Dendritic cell treated with granulocyte-macrophage colony-stimulating factor and Interleukin-4, amounts not matched to agents 40 ng/mL and 50 ng/mL, for 4 days (primary cell): ENCODE measurements at regions of chr6 and their contacts with region 1.

Region 1: GRCh38 chr6:157184202-157185020 is 138.9 kb downstream of the TMEM242 start:
- H3K4me3 Mint-ChIP-seq: no peak overlapping the region
- H3K27ac Mint-ChIP-seq: peak overlapping the region; percentile 11
- H3K4me1 Mint-ChIP-seq: no peaks in the 10 kb centered on the region
- H3K27me3 Mint-ChIP-seq: no peaks in the 10 kb centered on the region

Region 2: GRCh38 chr6:157034436-157035230 is 149.8 kb before region 1 on chr6:
- intact Hi-C with region 1: loop called (anchors 2 kb)
- H3K4me3 Mint-ChIP-seq: no peak overlapping the region
- H3K27ac Mint-ChIP-seq: no peak overlapping the region
- H3K4me1 Mint-ChIP-seq: peaks cover 14% of the 10 kb centered on the region
- H3K27me3 Mint-ChIP-seq: no peaks in the 10 kb centered on the region

Region 3: DNA sequence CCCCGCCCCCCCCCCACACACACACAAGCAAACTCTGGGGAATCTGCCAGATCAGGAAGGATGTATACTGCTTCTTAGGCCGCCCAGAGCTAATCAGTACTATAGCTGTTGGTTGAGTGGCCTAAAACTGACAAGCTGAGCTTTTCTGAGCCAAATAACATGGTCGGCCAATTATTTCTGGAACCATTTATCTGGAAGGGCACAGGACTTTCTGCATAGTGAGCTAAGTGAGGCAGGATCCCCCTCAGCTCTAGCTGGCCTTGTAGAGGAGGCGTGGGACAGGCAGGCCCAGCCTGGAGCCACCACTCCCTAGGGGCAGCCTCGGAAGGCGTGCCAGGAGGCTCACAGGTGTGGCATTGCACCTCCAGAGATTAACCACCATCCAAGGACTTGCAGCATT is 61.2 kb before region 1 on chr6:
- intact Hi-C with region 1: no loop called
- H3K4me3 Mint-ChIP-seq: no peak overlapping the region
- H3K27ac Mint-ChIP-seq: no peak overlapping the region
- H3K4me1 Mint-ChIP-seq: peaks cover 11% of the 10 kb centered on the region
- H3K27me3 Mint-ChIP-seq: no peaks in the 10 kb centered on the region

Region 4: DNA sequence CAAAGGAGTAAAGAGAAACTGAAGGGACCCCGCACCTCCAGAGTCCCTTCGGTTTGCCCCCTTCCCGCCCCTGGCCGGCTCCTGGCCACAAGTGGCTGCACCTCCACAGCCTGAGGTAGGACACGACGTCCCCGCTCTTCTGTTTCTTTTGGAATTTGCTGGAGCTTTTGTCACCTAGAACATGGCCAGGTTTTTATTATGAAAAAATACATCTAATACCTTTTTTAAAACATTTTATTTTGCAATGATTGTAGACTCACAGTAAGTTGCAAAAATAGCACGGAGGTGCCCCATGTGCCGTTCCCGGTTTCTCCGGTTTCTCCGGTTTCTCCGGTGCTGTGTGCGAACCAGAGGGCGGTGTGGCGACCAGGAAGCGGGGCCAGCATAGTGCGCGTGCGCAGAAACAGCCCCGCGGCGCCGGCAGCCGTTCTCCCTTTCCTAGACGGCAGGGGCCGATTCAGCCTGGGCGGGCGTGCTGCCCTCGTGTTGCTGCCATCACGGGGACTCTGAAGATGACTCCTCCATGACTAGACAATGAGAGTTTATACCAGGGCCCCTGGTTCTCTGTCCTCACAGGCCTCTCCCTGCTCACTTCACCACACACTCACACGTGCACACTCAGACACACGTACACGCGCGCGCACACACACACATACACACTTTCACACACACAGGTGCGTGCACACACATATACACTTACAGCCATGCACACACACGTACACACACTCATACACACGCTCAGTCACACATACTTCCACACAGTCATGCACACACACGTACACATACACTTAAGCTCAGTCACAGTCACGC is 36.8 kb after region 1 on chr6:
- intact Hi-C with region 1: no loop called
- H3K4me3 Mint-ChIP-seq: peak overlapping the region; percentile 67
- H3K27ac Mint-ChIP-seq: peak overlapping the region; percentile 10
- H3K4me1 Mint-ChIP-seq: peaks cover 25% of the 10 kb centered on the region
- H3K27me3 Mint-ChIP-seq: peaks cover 34% of the 10 kb centered on the region